ENCODE measurements at regions of chr9 and their contacts with region 1.

Region 1: DNA sequence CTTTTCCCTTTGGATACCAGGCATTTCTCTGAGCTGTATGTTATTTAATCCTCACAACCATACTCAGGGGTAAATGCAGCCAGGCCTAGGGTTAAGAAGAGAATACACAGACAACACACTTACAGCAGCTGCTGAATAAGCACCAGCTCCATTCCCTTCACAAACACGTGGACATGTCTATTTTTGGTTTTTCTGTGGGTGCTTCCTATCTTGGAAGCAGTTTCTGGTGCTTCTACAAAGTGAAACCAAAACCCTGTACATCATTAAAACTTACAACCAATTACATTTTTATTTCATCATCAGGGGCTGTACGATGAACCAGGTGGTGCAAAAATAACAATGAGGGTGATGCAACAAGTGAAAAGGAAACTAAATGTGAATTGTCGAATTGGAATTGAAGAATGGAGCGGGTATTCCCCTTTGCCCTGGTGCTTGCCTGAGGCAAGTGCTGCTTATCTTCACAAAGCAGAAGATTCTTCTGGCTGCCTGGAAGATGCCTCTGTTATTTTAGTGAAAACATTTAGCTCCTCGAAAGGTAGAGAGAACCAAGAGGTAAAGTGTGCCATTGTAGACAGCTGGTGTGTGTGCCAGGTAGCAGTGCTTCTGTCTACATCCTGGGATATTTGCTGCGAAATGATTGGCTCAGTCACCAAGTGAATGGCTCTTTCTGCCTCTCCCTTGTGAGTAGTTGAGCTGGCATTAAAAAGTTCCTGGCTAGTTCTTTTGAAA is 18.6 kb upstream of the IFNB1 start:
- DNase-seq: peak; percentile 34
- H3K4me3 Mint-ChIP-seq: peak overlapping the region; percentile 51
- H3K27ac Mint-ChIP-seq: peak overlapping the region; percentile 8
- H3K4me1 Mint-ChIP-seq: peaks cover 33% of the 10 kb centered on the region
- H3K27me3 Mint-ChIP-seq: no peaks in the 10 kb centered on the region

Region 2: GRCh38 chr9:21078717-21079116 is 17.6 kb before region 1 on chr9:
- intact Hi-C with region 1: loop called (anchors 1 kb)
- DNase-seq: no peak
- H3K4me3 Mint-ChIP-seq: no peak overlapping the region
- H3K27ac Mint-ChIP-seq: peak overlapping the region; percentile 7
- H3K4me1 Mint-ChIP-seq: peaks cover 27% of the 10 kb centered on the region
- H3K27me3 Mint-ChIP-seq: peaks cover 22% of the 10 kb centered on the region